ENCODE measurements at regions of chr12 and their contacts with region 1.

Region 1: GRCh38 chr12:49098035-49098451 is 3.4 kb upstream of the DHH start:
- DNase-seq: peak; percentile 33
- H3K4me3 Mint-ChIP-seq: no peak overlapping the region
- H3K27ac Mint-ChIP-seq: no peak overlapping the region
- H3K4me1 Mint-ChIP-seq: peaks cover 9% of the 10 kb centered on the region
- H3K27me3 Mint-ChIP-seq: peaks cover 30% of the 10 kb centered on the region
- CTCF ChIP-seq: peak; percentile 43

Region 2: GRCh38 chr12:49049566-49050413 is 48.3 kb before region 1 on chr12:
- CTCF ChIA-PET with region 1: no interaction called
- intact Hi-C with region 1: no loop called
- DNase-seq: no peak
- H3K4me3 Mint-ChIP-seq: no peak overlapping the region
- H3K27ac Mint-ChIP-seq: no peak overlapping the region
- H3K4me1 Mint-ChIP-seq: no peaks in the 10 kb centered on the region
- H3K27me3 Mint-ChIP-seq: no peaks in the 10 kb centered on the region
- CTCF ChIP-seq: no peak

Region 3: DNA sequence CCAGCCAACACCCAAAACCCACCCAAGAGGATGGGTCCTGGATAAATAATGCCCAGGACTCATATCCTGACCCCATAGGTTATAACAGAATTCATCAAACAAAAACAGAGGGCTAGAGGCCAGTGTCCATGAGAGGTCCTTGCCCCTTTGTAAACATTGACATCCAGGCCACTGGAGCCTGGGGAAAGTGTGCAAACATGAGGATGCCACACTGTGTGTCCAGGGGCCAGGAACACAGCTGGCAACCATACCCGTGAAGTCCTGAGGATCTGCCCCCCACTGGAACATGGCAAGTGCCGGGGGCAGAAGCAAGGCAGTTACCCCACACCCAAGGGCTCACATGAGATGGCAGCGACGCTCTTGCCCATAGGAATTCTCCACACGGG is 33.3 kb before region 1 on chr12:
- CTCF ChIA-PET with region 1: interaction called, 3 read pairs
- intact Hi-C with region 1: loop called (anchors 2 kb)
- DNase-seq: no peak
- H3K4me3 Mint-ChIP-seq: no peak overlapping the region
- H3K27ac Mint-ChIP-seq: no peak overlapping the region
- H3K4me1 Mint-ChIP-seq: peaks cover 9% of the 10 kb centered on the region
- H3K27me3 Mint-ChIP-seq: no peaks in the 10 kb centered on the region
- CTCF ChIP-seq: no peak

Measured in Calu3 (cell line).